ENCODE measurements at regions of chr22 and their contacts with region 1.

Region 1: DNA sequence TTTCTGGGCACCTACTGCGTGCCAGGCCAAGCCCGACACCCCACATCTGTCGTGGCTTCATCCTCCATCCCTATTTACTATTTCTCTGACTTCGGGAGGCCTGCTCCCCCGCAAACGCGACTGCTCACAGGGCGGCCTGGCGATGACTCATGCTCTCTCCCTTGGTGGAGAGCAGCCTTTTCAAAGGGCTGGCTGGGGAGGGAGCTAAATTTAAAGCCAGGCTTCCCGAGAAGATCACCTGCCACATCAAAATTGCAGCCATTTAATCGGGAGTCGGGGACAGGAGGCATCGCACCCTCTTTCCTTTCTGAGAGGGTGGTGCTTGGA is 24.9 kb upstream of the SHISAL1 start:
- DNase-seq: no peak
- ATAC-seq: peak; percentile 63
- H3K4me3 ChIP-seq: no peak overlapping the region
- H3K27ac ChIP-seq: no peak overlapping the region
- H3K4me1 ChIP-seq: peaks cover 4 to 19% of the 10 kb centered on the region in 2 experiments; a peak in 3 of 4 replicates
- H3K27me3 ChIP-seq: no peaks in the 10 kb centered on the region
- CTCF ChIP-seq: no peak
- POLR2A ChIP-seq: no peak
- RAD21 ChIP-seq: no peak

Region 2: DNA sequence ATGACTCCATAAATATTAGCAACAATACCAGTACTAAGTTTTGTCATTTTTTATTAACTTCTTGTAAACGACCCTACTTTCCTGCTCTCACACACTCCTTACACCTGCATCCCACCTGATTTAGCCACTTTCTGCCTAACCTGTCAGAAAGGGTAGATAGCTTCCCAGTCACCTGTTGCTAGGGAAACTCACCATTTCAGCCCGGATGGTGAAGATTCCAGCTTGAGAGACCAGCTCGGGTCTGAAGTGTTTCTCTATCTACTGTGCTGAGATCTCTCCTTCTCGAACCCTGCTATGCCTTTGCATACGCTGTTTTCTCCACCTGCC is 157.0 kb before region 1 on chr22 and contains the start of gene PARVG:
- CTCF ChIA-PET with region 1: no interaction called
- POLR2A ChIA-PET with region 1: no interaction called
- RAD21 ChIA-PET with region 1: no interaction called
- intact Hi-C with region 1: no loop called
- DNase-seq: no peak
- ATAC-seq: 0 out of 2 replicates have a peak, but pooled peaks have one; percentile 38
- H3K4me3 ChIP-seq: no peak within 1 kb of the TSS
- H3K27ac ChIP-seq: no peak within 1 kb of the TSS
- H3K4me1 ChIP-seq: no peaks in the 10 kb centered on the region
- H3K27me3 ChIP-seq: peaks cover 3% of the 10 kb centered on the region; the same call in 1 of the 2 replicates
- CTCF ChIP-seq: no peak
- POLR2A ChIP-seq: no peak
- RAD21 ChIP-seq: no peak
- total RNA-seq, gene PARVG: 0.57 TPM

Region 3: DNA sequence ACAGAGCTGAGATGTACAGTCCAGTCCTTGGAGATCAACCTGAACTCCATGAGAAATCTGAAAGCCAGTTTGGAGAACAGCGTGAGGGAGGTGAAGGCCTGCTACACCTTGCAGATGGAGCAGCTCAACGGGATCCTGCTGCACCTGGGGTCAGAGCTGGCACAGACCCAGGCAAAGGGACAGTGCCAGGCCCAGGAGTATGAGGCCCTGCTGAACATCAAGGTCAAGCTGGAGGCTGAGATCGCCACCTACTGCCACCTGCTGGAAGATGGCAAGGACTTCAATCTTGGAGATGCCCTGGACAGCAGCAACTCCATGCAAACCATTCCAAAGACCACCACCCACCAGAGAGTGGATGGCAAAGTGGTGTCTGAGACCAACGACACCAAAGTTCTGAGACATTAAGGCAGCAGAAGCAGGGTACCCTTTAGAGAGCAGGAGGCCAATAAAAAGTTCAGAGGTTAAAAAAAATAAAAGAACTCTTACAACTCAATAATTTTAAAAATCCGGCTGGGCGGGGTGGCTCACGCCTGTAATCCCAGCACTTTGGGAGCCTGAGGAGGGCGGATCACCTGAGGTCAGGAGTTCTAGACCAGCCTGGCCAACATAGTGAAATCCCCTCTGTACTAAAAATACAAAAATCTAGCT is 230.3 kb after region 1 on chr22:
- CTCF ChIA-PET with region 1: interaction called, 4 read pairs
- POLR2A ChIA-PET with region 1: no interaction called
- RAD21 ChIA-PET with region 1: no interaction called
- intact Hi-C with region 1: loop called (anchors 5 kb)
- DNase-seq: peak; percentile 54
- ATAC-seq: peak; percentile 42; the same call in 1 of the 2 replicates
- H3K4me3 ChIP-seq: no peak overlapping the region
- H3K27ac ChIP-seq: no peak overlapping the region
- H3K4me1 ChIP-seq: peaks cover 0 to 12% of the 10 kb centered on the region in 2 experiments; a peak in 1 of 4 replicates
- H3K27me3 ChIP-seq: no peaks in the 10 kb centered on the region
- CTCF ChIP-seq: peak; percentile 29 to 69 (median 69); a peak in 5 of 6 replicates
- POLR2A ChIP-seq: no peak
- RAD21 ChIP-seq: peak; percentile 55

Measured in HCT116 (cell line).